ENCODE measurements at regions of chr4 and their contacts with region 1.

Region 1: DNA sequence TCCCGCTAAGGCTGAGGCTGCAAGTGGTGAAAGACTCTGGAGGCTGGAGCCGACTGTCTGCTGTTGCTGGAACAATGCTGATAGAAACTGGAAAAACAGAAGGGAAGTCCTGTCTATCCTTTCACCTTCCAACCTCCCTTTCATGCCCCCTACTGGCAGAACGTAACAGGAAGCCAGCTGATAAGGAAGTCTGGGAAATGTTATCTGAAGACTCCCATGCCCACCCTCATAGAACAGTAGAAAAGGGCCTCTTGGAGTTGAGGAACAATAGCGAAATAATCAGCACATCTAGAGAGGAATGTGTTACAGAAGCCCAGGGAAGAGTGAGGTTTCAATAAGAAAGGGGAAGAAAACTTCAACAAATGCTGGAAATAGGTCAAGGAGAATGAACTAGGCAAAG is 117.1 kb upstream of the DKK2 start:
- DNase-seq: peak; percentile 56
- H3K4me3 ChIP-seq: no peak overlapping the region
- H3K27ac ChIP-seq: peak overlapping the region; percentile 17
- H3K4me1 ChIP-seq: no peaks in the 10 kb centered on the region
- H3K27me3 ChIP-seq: no peaks in the 10 kb centered on the region
- CTCF ChIP-seq: peak; percentile 33 to 39
- POLR2A ChIP-seq: no peak

Region 2: DNA sequence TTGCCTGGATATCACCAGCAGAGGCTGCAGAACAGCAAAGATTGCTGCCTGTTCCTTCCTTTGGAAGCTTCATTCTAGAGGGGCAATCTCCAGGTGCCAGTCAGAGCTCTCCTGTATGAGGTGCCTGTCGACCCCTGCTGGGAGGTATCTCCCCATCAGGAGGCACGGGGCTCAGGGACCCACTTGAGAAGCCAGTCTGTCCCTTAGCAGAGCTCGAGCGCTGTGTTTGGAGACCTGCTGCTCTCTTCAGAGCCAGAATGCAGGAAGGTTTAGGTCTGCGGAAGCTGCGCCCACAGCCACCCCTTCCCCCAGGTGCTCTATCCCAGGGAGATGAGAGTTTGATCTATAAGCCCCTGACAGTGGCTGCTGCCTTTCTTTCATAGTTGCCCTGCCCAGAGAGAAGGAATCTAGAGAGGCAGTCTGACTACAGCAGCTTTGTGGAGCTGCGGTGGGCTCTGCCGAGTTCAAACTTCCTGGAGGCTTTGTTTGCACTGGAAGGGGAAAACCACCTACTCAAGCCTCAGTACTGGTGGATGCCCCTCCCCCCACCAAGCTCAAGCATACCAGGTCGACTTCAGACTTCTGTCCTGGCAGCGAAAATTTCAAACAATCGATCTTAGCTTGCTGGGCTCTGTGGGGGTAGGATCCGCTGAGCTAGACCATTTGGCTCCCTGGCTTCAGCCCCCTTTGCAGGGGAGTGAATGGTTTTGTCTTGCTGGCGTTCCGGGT is 175.0 kb before region 1 on chr4:
- CTCF ChIA-PET with region 1: no interaction called
- POLR2A ChIA-PET with region 1: no interaction called
- dilution Hi-C with region 1: no loop called
- intact Hi-C with region 1: no loop called
- DNase-seq: no peak
- H3K4me3 ChIP-seq: no peak overlapping the region
- H3K27ac ChIP-seq: no peak overlapping the region
- H3K4me1 ChIP-seq: no peaks in the 10 kb centered on the region
- H3K27me3 ChIP-seq: no peaks in the 10 kb centered on the region
- CTCF ChIP-seq: no peak
- POLR2A ChIP-seq: no peak

Region 3: GRCh38 chr4:107094332-107094731 is 58.9 kb before region 1 on chr4:
- CTCF ChIA-PET with region 1: interaction called, 3 read pairs
- POLR2A ChIA-PET with region 1: no interaction called
- dilution Hi-C with region 1: no loop called
- intact Hi-C with region 1: loop called (anchors 1 kb)
- DNase-seq: peak; percentile 50
- H3K4me3 ChIP-seq: no peak overlapping the region
- H3K27ac ChIP-seq: no peak overlapping the region
- H3K4me1 ChIP-seq: no peaks in the 10 kb centered on the region
- H3K27me3 ChIP-seq: no peaks in the 10 kb centered on the region
- CTCF ChIP-seq: peak; percentile 37 to 53
- POLR2A ChIP-seq: no peak

Region 4: DNA sequence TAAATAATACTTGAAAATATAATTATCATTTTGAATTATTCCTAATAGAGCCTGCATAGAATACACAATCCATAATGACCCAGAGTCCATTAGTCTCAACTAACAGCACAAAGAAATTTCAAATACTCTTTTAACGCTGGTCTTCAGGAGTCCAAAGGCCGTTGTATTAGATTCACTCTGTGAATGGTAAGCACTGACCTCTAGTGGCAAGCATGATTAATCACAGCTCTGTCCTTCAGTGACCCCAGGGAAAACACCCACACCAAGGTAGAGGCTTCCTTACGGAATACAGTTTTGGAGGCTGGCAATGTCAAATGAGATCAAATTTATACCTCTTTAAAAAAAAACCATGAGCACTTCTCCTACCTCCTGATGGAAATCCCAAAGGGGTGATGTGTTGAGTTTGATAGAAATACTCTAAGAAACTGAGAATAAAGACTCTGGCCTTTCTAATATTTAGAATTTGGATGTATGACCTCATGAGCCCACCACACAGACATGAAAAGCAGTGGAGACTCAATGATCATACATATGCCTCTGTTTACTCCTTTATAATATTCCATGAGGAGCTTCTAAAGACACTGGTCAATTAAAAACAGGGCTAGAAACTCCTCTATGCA is 30.0 kb after region 1 on chr4:
- CTCF ChIA-PET with region 1: no interaction called
- POLR2A ChIA-PET with region 1: no interaction called
- dilution Hi-C with region 1: no loop called
- intact Hi-C with region 1: no loop called
- DNase-seq: peak; percentile 69
- H3K4me3 ChIP-seq: no peak overlapping the region
- H3K27ac ChIP-seq: no peak overlapping the region
- H3K4me1 ChIP-seq: no peaks in the 10 kb centered on the region
- H3K27me3 ChIP-seq: no peaks in the 10 kb centered on the region
- CTCF ChIP-seq: peak; percentile 63 to 70
- POLR2A ChIP-seq: no peak

Region 5: DNA sequence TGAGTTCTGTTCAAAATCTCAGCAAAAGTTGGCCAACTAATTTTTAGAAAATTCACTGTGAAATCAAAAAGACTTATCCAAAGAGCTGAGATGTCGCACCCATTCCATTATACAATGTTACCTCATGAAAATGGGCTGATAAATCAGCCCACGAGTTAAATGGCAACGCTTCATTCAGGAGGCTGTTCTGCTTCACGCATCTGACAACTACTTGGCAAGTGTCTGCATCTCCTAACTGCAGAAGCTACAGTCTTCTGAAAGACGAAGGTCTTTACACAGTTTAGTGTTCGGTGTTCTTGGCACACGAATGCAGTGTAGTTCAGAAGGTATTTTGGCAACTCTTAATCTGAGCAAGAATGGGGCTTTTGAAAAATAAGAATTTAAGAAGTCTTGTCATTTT is 49.5 kb after region 1 on chr4:
- CTCF ChIA-PET with region 1: no interaction called
- POLR2A ChIA-PET with region 1: no interaction called
- dilution Hi-C with region 1: no loop called
- intact Hi-C with region 1: no loop called
- DNase-seq: no peak
- H3K4me3 ChIP-seq: no peak overlapping the region
- H3K27ac ChIP-seq: no peak overlapping the region
- H3K4me1 ChIP-seq: no peaks in the 10 kb centered on the region
- H3K27me3 ChIP-seq: no peaks in the 10 kb centered on the region
- CTCF ChIP-seq: no peak
- POLR2A ChIP-seq: no peak

Region 6: DNA sequence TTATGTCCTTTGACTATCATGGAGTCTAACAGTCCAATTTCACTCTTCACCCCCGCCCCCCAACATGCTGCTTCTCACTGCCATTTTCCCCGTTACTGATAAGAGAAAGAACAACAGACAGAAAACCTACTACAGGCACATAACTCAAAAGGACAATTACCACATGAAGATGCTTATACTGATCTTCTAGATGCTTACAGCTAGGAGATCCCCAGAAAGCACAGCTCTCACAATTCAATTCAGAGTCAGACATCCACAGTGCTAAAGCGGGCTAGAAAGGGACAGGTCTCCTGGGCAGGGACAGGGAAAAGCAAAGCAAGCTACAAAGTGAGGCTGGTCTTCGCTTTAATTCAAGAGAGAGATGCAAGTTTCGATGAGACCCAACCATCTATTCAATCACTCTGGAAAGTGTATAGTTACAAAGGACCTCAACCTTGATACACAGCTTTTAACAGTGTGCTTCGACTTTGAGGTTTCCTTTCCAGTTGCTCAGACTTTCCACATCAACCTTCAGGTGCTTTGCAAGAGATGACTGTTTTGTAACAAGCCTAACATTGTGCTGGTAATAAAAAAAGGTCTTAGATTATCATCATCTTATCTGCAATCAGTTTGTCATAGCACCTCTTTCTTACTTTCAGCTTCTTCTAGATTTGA is 954.6 kb after region 1 on chr4:
- CTCF ChIA-PET with region 1: no interaction called
- POLR2A ChIA-PET with region 1: no interaction called
- dilution Hi-C with region 1: no loop called
- intact Hi-C with region 1: no loop called
- DNase-seq: no peak
- H3K4me3 ChIP-seq: no peak overlapping the region
- H3K27ac ChIP-seq: no peak overlapping the region
- H3K4me1 ChIP-seq: no peaks in the 10 kb centered on the region
- H3K27me3 ChIP-seq: no peaks in the 10 kb centered on the region
- CTCF ChIP-seq: no peak
- POLR2A ChIP-seq: no peak